IMR-90 (cell line): ENCODE measurements at regions of chr12 and their contacts with region 1.

Region 1: DNA sequence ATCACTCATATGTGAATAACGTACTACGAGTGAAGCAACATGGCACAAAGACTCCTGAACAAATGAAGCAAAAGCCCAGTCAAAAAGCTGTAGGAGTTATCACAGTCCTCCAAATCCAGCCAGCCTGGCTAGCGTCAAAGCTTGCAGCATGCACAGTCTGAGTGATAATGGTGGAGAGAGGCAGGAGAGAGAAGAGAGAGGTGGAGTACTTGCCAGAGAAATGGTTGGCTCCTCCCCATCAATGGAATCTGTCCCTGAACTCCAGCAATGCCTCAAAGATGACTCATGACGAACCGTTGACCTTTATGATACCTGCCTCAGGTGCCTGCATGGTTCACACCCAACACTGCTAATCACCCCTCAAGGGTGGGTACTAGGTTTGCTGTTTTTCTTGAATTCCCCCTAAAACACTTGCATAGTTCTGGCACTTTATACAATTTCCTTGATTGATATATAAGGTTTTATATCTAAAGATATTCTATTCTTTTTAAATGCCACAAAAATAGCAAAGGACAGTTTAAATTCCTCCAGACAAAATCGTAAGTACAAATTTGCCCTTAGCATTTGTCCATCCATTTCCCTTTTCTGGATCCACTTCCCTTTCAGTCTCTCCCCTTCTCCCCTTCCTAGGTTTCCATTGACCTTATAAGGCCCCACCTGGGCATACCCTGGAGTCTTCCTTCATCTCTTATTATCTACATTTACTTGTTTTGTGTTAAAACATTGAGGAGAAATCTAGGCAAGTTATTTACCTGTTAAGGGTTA is 10.2 kb downstream of the ARHGDIB start:
- DNase-seq: no peak
- ATAC-seq: no peak
- H3K4me3 ChIP-seq: no peak overlapping the region
- H3K27ac ChIP-seq: peak overlapping the region; percentile 48; the same call in 1 of the 2 replicates
- H3K4me1 ChIP-seq: peaks cover 25% of the 10 kb centered on the region
- H3K27me3 ChIP-seq: no peaks in the 10 kb centered on the region
- CTCF ChIP-seq: no peak
- POLR2A ChIP-seq: no peak
- RAD21 ChIP-seq: no peak

Region 2: GRCh38 chr12:14937689-14938088 is 13.5 kb before region 1 on chr12:
- CTCF ChIA-PET with region 1: no interaction called
- POLR2A ChIA-PET with region 1: no interaction called
- dilution Hi-C with region 1: no loop called
- in situ Hi-C with region 1: no loop called
- intact Hi-C with region 1: loop called (anchors 1 kb)
- DNase-seq: no peak
- ATAC-seq: no peak
- H3K4me3 ChIP-seq: no peak overlapping the region
- H3K27ac ChIP-seq: no peak overlapping the region
- H3K4me1 ChIP-seq: peaks cover 2% of the 10 kb centered on the region; the same call in 1 of the 2 replicates
- H3K27me3 ChIP-seq: no peaks in the 10 kb centered on the region
- CTCF ChIP-seq: 0 out of 2 replicates have a peak, but pooled peaks have one; percentile 8
- POLR2A ChIP-seq: no peak
- RAD21 ChIP-seq: no peak

Region 3: DNA sequence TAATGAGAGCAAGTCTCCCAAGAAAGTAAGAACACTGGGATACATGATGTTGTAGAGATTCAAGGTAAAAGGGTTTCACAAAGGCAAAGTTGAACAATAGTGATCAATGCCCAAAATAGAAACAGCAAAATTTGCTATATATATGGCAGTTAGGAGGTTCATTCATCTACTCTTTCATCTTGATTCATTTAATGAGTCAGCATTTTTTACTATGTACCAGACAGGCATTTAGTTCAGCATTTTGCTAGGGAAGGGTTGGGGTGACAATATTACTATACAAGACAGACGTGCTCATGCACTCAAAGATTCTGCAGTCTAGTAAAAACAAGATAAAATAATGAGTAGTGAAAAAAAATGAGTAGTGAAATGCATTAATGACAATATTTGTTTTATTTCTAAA is 1919.7 kb after region 1 on chr12:
- CTCF ChIA-PET with region 1: no interaction called
- POLR2A ChIA-PET with region 1: no interaction called
- dilution Hi-C with region 1: no loop called
- in situ Hi-C with region 1: no loop called
- intact Hi-C with region 1: no loop called
- DNase-seq: no peak
- ATAC-seq: no peak
- H3K4me3 ChIP-seq: no peak overlapping the region
- H3K27ac ChIP-seq: no peak overlapping the region
- H3K4me1 ChIP-seq: no peaks in the 10 kb centered on the region
- H3K27me3 ChIP-seq: no peaks in the 10 kb centered on the region
- CTCF ChIP-seq: no peak
- POLR2A ChIP-seq: no peak
- RAD21 ChIP-seq: no peak